ENCODE measurements at regions of chr10 and their contacts with region 1.

Region 1: DNA sequence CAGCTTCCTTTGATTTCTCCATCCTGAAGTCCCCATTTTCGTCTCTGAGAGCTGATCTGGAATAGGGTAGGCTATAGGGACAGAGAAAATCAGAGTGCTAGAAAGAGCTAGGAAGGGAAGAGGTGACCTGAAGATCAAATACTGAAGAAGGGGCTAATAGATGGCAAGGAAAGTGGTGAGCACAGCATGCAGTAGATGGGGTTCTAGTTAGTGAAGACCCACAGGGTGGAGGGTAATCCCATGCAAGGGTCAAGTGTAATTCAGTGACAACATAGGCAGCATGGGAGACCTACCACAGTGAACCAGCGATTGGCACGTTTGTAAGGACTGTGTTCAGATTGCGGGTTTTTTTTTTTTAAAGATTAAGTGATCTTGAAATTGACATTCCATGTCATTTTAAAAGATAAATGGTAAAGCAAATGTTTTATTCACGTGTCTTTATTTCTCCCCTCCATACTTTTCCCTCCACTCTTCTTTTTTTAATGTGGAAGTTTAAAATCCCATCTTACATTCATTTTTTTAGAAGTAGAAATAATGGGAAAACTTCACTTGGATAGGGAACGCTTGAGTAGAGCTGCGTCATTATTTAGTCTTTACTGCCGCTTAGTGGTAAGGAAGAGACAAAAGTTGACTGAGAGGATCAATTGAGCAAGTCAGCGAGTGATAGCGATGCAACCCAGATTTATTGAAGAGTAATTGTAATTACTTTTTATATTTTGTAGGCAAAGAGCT is 21.0 kb upstream of the ABI1 start:
- DNase-seq: peak; percentile 55
- H3K4me3 ChIP-seq: no peak overlapping the region
- H3K27ac ChIP-seq: no peak overlapping the region
- H3K4me1 ChIP-seq: no peaks in the 10 kb centered on the region
- H3K27me3 ChIP-seq: no peaks in the 10 kb centered on the region
- CTCF ChIP-seq: peak; percentile 83 to 89

Region 2: GRCh38 chr10:26556748-26557640 is 324.8 kb before region 1 on chr10:
- CTCF ChIA-PET with region 1: no interaction called
- dilution Hi-C with region 1: no loop called
- in situ Hi-C with region 1: no loop called
- intact Hi-C with region 1: loop called (anchors 2 kb)
- DNase-seq: peak; percentile 26
- H3K4me3 ChIP-seq: no peak overlapping the region
- H3K27ac ChIP-seq: no peak overlapping the region
- H3K4me1 ChIP-seq: no peaks in the 10 kb centered on the region
- H3K27me3 ChIP-seq: no peaks in the 10 kb centered on the region
- CTCF ChIP-seq: peak; percentile 81 to 94

Region 3: GRCh38 chr10:26725837-26726727 is 155.7 kb before region 1 on chr10:
- CTCF ChIA-PET with region 1: no interaction called
- dilution Hi-C with region 1: no loop called
- in situ Hi-C with region 1: loop called in 1 of 2 experiments (anchors 10 kb)
- intact Hi-C with region 1: loop called (anchors 1 kb)
- DNase-seq: peak; percentile 29
- H3K4me3 ChIP-seq: no peak overlapping the region
- H3K27ac ChIP-seq: no peak overlapping the region
- H3K4me1 ChIP-seq: no peaks in the 10 kb centered on the region
- H3K27me3 ChIP-seq: no peaks in the 10 kb centered on the region
- CTCF ChIP-seq: peak; percentile 76 to 85

Region 4: DNA sequence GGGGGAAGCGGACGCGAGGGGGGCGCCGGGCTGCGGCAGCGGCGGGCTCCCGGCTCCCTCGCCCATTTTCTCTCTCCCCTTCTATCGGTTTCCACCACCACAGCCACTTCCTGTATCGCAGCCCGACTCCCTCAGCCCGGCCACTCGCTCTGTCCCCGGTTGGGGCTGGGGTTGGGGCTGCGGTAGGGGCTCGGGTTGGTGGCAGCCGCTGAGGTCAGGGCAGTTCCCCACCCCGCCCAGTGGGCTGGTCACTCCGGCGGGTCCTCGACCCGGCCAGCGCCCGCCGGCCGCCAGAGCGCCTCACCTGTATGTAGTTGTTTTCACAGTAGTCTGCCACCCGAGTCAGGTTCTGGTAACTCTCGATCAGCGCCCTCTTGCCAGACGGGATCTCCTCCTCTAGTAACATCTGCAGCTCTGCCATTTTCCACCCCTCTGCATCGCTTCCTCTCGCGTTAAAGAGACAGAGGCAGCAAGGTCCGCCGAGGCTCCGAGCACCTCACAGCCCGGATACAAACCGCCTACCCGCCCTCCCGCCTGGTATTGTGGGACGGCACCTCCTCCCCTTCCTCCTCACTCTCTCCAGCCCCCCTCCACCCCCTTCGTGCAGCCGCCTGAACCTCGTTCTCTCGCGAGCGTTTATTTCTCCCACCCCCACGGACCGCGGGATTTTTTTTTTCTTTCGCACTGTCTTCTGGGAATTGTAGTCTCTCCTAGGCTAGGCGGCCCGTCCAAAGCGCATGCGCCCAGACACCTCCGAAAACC is 21.1 kb before region 1 on chr10 and contains the start of gene ABI1:
- CTCF ChIA-PET with region 1: interaction called, 3 read pairs
- dilution Hi-C with region 1: no loop called
- in situ Hi-C with region 1: no loop called
- intact Hi-C with region 1: loop called (anchors 1 kb)
- DNase-seq: peak; percentile 98
- H3K4me3 ChIP-seq: peak within 1 kb of the TSS; percentile 88 to 100 (median 89)
- H3K27ac ChIP-seq: peak within 1 kb of the TSS; percentile 100
- H3K4me1 ChIP-seq: peaks cover 16% of the 10 kb centered on the region
- H3K27me3 ChIP-seq: no peaks in the 10 kb centered on the region
- CTCF ChIP-seq: no peak
- total RNA-seq, gene ABI1: 55.2 to 72.6 TPM

Measured in mammary epithelial cell (primary cell).